ENCODE measurements at regions of chr17 and their contacts with region 1.

Region 1: GRCh38 chr17:47184681-47185080 is 4.4 kb downstream of the CDC27 start:
- H3K4me3 ChIP-seq: no peak overlapping the region
- H3K27ac ChIP-seq: no peak overlapping the region
- H3K4me1 ChIP-seq: peaks cover 11% of the 10 kb centered on the region; the same call in 1 of the 2 replicates
- CTCF ChIP-seq: no peak

Region 2: GRCh38 chr17:47208744-47209488 is 24.2 kb after region 1 on chr17 and contains the start of gene MYL4:
- CTCF ChIA-PET with region 1: interaction called, 5 read pairs
- POLR2A ChIA-PET with region 1: interaction called, 12 read pairs
- H3K4me3 ChIP-seq: no peak within 1 kb of the TSS
- H3K27ac ChIP-seq: no peak within 1 kb of the TSS
- H3K4me1 ChIP-seq: 0 out of 2 replicates have a peak, but pooled peaks cover 5% of the 10 kb centered on the region
- CTCF ChIP-seq: no peak